Calu3 (cell line): ENCODE measurements at regions of chr1 and their contacts with region 1.

Region 1: DNA sequence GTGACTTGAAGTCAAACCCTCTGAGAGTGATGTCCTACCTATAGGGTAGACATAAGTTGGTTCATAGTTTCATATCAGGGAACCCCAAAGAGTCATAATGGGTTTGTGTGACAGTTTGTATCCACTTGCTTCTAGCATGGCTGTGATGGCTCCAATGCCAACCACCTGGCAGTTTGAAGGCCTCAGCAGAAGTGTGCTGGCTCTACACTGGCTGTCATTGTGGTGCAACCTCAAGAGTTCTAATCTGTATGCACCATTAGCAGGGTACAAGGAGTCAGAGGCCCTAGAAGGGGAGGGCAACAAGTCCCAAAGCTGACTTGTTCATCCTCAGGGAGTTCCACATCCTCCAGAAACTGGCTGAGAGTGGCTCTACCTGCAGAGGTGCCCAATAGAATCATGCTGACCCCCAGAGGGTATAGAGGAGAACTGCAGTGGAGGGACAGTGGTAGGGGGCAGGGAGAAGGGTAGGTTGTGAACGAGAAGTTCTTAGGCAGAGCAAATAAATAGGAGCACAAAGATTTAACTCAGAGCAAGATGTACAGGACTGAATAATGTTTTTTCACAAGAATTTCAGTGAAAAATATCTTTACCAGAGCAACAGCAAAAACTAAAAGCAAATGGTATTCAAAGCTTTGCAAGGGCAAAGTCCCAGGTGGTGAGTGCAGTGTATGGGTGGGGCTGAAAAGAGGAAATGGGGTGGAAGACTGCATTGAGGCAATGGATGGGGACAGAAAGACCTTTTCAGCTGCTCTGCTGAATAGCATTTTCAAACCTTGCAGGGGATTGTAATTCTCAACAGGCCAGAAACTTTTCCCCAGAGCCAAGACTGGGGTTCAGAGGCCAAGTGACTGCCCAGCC is 3.2 kb downstream of the FCRL2 start:
- DNase-seq: peak; percentile 70
- H3K4me3 Mint-ChIP-seq: peak overlapping the region; percentile 31
- H3K27ac Mint-ChIP-seq: peak overlapping the region; percentile 10
- H3K4me1 Mint-ChIP-seq: peaks cover 66% of the 10 kb centered on the region
- H3K27me3 Mint-ChIP-seq: no peaks in the 10 kb centered on the region
- CTCF ChIP-seq: peak; percentile 84

Region 2: DNA sequence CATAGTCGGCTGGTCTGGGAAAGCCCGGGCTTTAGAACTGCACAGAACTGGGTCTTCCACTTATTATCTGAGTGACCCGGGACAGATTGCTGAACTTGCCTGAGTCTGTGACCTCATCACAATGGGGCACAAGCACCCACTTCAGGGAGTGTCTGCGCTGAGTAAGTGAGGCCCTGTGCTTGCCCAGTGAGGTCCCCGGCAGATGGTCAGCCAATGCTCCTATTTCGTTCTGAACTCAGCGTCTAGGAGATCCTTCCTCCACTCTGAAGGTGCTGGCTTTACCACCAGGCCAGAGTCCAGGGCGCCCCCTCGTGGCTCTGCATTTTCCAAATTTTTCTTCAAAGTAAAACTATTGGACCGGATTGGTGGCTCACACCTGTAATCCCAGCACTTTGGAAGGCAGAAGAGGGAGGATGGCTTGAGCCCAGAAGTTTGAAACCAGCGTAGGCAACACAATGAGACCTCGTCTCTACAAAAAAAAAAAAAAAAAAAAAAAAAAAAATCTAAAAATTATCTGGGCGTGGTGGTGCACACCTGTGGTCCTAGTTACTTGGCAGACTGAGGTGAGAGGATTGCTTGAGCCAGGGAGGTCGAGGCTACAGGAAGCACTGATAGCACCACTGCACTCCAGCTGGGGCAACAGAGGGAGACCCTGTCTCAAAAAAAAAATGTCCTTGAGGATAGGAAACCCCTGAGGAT is 283.1 kb before region 1 on chr1:
- CTCF ChIA-PET with region 1: no interaction called
- intact Hi-C with region 1: loop called (anchors 1 kb)
- DNase-seq: peak; percentile 90
- H3K4me3 Mint-ChIP-seq: no peak overlapping the region
- H3K27ac Mint-ChIP-seq: no peak overlapping the region
- H3K4me1 Mint-ChIP-seq: no peaks in the 10 kb centered on the region
- H3K27me3 Mint-ChIP-seq: peaks cover 43% of the 10 kb centered on the region
- CTCF ChIP-seq: peak; percentile 88

Region 3: GRCh38 chr1:157580179-157580827 is 193.4 kb before region 1 on chr1:
- CTCF ChIA-PET with region 1: interaction called, 21 read pairs
- intact Hi-C with region 1: loop called (anchors 1 kb)
- DNase-seq: peak; percentile 69
- H3K4me3 Mint-ChIP-seq: no peak overlapping the region
- H3K27ac Mint-ChIP-seq: no peak overlapping the region
- H3K4me1 Mint-ChIP-seq: peaks cover 18% of the 10 kb centered on the region
- H3K27me3 Mint-ChIP-seq: no peaks in the 10 kb centered on the region
- CTCF ChIP-seq: peak; percentile 58

Region 4: GRCh38 chr1:157682710-157683437 is 90.8 kb before region 1 on chr1:
- CTCF ChIA-PET with region 1: no interaction called
- intact Hi-C with region 1: loop called (anchors 5 kb)
- DNase-seq: no peak
- H3K4me3 Mint-ChIP-seq: peak overlapping the region; percentile 97
- H3K27ac Mint-ChIP-seq: peak overlapping the region; percentile 99
- H3K4me1 Mint-ChIP-seq: peaks cover 84% of the 10 kb centered on the region
- H3K27me3 Mint-ChIP-seq: no peaks in the 10 kb centered on the region
- CTCF ChIP-seq: no peak

Region 5: DNA sequence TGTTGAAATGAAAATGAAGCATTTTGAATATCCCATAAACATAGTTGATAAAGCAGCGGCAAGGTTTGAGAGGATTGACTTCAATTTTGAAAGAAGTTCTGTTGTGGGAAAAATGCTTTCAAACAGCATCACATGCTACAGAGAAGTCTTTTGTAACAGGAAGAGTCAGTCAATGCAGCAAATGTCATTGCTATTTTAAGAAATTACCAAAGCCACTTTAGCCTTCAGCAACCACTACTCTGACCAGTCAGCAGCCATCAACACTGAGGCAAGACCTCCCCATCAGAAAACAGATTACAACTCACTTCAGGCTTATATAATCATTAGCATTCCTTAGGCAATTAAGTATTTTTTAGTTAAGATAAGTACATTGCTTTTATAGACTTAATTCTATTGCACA is 39.4 kb before region 1 on chr1:
- CTCF ChIA-PET with region 1: no interaction called
- intact Hi-C with region 1: no loop called
- DNase-seq: no peak
- H3K4me3 Mint-ChIP-seq: no peak overlapping the region
- H3K27ac Mint-ChIP-seq: no peak overlapping the region
- H3K4me1 Mint-ChIP-seq: peaks cover 10% of the 10 kb centered on the region
- H3K27me3 Mint-ChIP-seq: no peaks in the 10 kb centered on the region
- CTCF ChIP-seq: no peak

Region 6: GRCh38 chr1:157948312-157949073 is 174.8 kb after region 1 on chr1:
- CTCF ChIA-PET with region 1: interaction called, 3 read pairs
- intact Hi-C with region 1: loop called (anchors 5 kb)
- DNase-seq: peak; percentile 61
- H3K4me3 Mint-ChIP-seq: no peak overlapping the region
- H3K27ac Mint-ChIP-seq: no peak overlapping the region
- H3K4me1 Mint-ChIP-seq: peaks cover 26% of the 10 kb centered on the region
- H3K27me3 Mint-ChIP-seq: peaks cover 28% of the 10 kb centered on the region
- CTCF ChIP-seq: peak; percentile 72